ENCODE measurements at regions of chr12 and their contacts with region 1.

Region 1: DNA sequence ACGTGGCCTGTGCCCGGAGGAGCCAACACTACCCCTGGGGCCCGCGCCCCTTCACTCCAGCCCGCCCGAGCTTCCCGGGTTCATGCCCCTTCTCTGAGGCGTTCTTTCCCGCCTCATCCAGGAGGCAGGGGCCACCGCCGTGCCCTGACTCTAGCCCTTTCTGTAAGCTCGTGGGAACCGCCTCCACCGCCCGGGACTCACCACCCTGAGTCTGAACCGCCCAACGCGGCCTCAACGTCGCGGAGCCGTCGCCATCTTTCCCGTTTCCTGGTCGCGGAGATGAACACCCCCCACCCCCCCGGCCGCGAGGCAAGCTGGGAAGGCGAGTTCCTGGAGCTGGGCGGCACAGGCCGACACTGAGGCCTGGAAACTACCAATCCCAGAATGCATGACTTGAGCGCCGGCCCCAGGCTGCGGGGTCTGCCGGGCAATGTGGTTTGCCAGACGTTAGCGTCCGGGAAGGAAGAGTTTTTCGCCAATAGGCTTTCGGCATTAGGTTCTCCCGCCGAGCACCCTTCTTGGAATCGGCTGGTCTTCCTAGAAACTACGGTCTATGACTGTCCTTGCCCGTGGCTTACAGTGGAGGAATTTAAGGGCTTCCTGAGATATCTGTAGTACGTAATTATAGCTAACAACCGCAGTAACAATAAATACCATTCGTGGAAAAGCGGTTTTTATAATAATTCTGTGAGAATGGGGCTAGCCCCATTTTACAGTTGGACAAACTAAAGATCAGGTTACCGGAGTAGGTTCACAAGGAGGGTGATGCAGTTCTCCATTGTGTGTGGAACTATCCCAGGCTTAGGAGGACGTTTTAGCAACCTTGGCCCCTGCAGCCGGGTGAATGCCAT is at the start of gene DDX23:
- DNase-seq: peak; percentile 96
- ATAC-seq: peak; percentile 96
- H3K4me3 Mint-ChIP-seq: peak within 1 kb of the TSS; percentile 97
- H3K27ac Mint-ChIP-seq: peak within 1 kb of the TSS; percentile 96
- H3K4me1 Mint-ChIP-seq: peaks cover 27% of the 10 kb centered on the region
- H3K27me3 Mint-ChIP-seq: no peaks in the 10 kb centered on the region
- CTCF ChIP-seq: no peak
- total RNA-seq, gene DDX23: 84.5 to 95.6 TPM

Region 2: DNA sequence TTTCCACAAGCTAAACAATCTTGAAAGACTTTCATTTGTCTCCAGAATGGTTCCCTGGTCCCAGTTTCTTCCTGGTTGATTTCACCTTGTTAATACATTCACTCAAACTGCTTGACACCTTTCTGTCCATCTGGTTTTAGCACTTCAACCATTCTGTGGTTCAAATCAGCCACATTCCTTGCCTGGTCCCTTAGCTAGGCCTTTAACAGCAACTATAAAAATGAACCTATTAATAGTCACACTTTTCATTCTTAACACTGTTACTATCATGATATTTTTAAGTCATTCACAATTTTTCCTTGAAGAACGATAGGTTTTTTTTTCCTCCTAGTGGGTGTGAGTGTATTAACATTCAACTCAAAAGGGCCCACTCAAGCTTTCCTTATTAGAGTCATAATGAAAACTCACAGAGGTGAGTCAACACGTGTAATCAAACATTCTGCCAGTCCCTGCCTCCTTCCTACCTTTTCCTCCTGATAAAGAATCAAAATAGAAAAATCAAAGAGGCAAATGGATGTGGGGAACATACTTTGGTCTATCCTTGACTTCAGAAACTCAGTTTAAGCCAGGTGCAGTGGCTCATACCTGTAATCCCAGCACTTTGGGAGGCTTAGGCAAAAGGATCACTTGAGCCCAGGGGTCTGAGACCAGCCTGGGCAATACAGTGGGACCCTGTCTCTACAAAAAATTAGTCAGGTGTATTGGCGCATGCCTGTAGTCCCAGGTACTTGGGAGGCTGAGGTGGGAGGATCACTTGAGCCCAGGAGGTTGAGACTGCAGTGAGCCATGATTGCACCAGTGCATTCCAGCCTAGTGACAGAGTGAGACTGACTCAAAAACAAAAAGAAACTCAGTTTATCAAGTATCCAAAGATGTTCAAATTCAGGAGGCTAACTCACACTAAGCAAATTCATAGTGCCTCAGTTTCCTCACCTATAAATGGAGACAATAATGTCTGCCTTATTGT is 101.1 kb before region 1 on chr12:
- CTCF ChIA-PET with region 1: interaction called, 19 read pairs
- POLR2A ChIA-PET with region 1: interaction called, 3 read pairs
- intact Hi-C with region 1: no loop called
- DNase-seq: peak; percentile 36
- ATAC-seq: peak; percentile 85
- H3K4me3 Mint-ChIP-seq: no peak overlapping the region
- H3K27ac Mint-ChIP-seq: peak overlapping the region; percentile 74
- H3K4me1 Mint-ChIP-seq: peaks cover 18% of the 10 kb centered on the region
- H3K27me3 Mint-ChIP-seq: peaks cover 7% of the 10 kb centered on the region
- CTCF ChIP-seq: peak; percentile 28

Region 3: GRCh38 chr12:48873096-48873495 is 21.0 kb after region 1 on chr12:
- CTCF ChIA-PET with region 1: interaction called, 103 read pairs
- POLR2A ChIA-PET with region 1: interaction called, 56 read pairs
- intact Hi-C with region 1: no loop called
- DNase-seq: no peak
- ATAC-seq: no peak
- H3K4me3 Mint-ChIP-seq: no peak overlapping the region
- H3K27ac Mint-ChIP-seq: no peak overlapping the region
- H3K4me1 Mint-ChIP-seq: no peaks in the 10 kb centered on the region
- H3K27me3 Mint-ChIP-seq: no peaks in the 10 kb centered on the region
- CTCF ChIP-seq: no peak

Region 4: DNA sequence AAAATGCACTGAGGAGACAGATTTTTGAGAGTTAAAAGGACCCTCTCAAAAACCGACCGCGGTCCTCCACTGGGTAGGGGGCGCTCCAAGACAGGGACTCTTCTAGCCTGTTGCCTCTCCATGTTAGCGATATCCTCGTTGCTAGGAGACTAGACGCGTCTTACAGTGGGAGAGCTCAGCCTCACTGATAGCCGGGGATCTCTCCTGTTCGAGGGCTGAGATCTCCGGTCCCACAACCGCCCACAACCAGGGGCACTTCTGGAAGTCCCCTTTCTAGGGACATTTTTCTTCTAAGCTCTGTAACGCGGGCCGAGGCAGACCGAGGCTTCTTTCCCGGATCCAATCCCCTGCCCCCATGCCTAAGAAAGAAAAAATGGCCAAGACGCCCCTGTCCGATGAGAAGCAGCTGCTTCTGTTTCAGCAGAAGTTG is 51.9 kb after region 1 on chr12:
- CTCF ChIA-PET with region 1: interaction called, 81 read pairs
- POLR2A ChIA-PET with region 1: no interaction called
- intact Hi-C with region 1: no loop called
- DNase-seq: peak; percentile 91
- ATAC-seq: peak; percentile 98
- H3K4me3 Mint-ChIP-seq: peak overlapping the region; percentile 58
- H3K27ac Mint-ChIP-seq: no peak overlapping the region
- H3K4me1 Mint-ChIP-seq: peaks cover 7% of the 10 kb centered on the region
- H3K27me3 Mint-ChIP-seq: no peaks in the 10 kb centered on the region
- CTCF ChIP-seq: peak; percentile 79

Region 5: GRCh38 chr12:48957141-48958048 is 105.3 kb after region 1 on chr12 and contains the start of gene ARF3:
- CTCF ChIA-PET with region 1: interaction called, 14 read pairs
- POLR2A ChIA-PET with region 1: interaction called, 5 read pairs
- intact Hi-C with region 1: no loop called
- DNase-seq: peak; percentile 94
- ATAC-seq: peak; percentile 96
- H3K4me3 Mint-ChIP-seq: peak within 1 kb of the TSS; percentile 96
- H3K27ac Mint-ChIP-seq: peak within 1 kb of the TSS; percentile 87
- H3K4me1 Mint-ChIP-seq: peaks cover 25% of the 10 kb centered on the region
- H3K27me3 Mint-ChIP-seq: peaks cover 7% of the 10 kb centered on the region
- CTCF ChIP-seq: no peak
- total RNA-seq, gene ARF3: 58.3 to 67.6 TPM

Region 6: DNA sequence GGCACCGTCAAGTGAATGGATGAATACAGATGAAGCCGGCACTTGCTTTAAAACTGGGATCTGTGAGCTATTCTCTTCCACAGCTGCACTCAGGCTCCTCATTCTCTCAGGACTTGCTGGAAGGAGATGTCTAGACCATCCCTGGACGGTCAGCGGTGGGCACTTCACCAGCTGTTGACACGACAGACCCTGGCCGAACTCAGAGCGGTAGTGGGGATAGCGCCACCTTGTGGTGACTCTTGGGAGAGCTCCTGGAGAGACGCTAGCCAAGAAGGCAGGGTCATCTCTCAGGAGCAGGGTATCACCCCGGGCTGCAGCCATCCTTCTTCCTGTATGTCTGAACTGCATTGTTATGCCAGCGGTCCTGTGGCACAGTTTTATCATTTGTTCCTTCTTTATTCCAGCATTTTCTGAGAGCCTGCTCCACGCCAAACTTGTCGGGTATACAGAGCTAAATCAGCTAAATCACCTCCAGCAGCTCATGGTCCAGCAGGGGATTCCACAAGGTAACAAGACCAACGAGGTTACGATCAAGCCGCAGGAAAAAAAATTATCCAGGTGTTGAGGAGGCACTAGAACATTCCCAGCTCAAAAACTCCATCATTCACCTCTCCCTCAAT is 136.0 kb after region 1 on chr12:
- CTCF ChIA-PET with region 1: interaction called, 22 read pairs
- POLR2A ChIA-PET with region 1: interaction called, 3 read pairs
- intact Hi-C with region 1: no loop called
- DNase-seq: peak; percentile 87
- ATAC-seq: peak; percentile 89
- H3K4me3 Mint-ChIP-seq: no peak overlapping the region
- H3K27ac Mint-ChIP-seq: no peak overlapping the region
- H3K4me1 Mint-ChIP-seq: no peaks in the 10 kb centered on the region
- H3K27me3 Mint-ChIP-seq: peaks cover 29% of the 10 kb centered on the region
- CTCF ChIP-seq: peak; percentile 96

Region 7: GRCh38 chr12:49055981-49056754 is 204.1 kb after region 1 on chr12:
- CTCF ChIA-PET with region 1: no interaction called
- POLR2A ChIA-PET with region 1: no interaction called
- intact Hi-C with region 1: no loop called
- DNase-seq: peak; percentile 76
- ATAC-seq: peak; percentile 77
- H3K4me3 Mint-ChIP-seq: peak overlapping the region; percentile 97
- H3K27ac Mint-ChIP-seq: peak overlapping the region; percentile 92
- H3K4me1 Mint-ChIP-seq: peaks cover 42% of the 10 kb centered on the region
- H3K27me3 Mint-ChIP-seq: no peaks in the 10 kb centered on the region
- CTCF ChIP-seq: no peak

Measured in activated CD8-positive, alpha-beta T cell treated with anti-CD3 and anti-CD28 coated beads for 36 hours (primary cell).